ENCODE measurements at regions of chr15 and their contacts with region 1.

Region 1: GRCh38 chr15:90886041-90886614 is 1.8 kb downstream of the FES start:
- DNase-seq: peak; percentile 87
- H3K4me3 Mint-ChIP-seq: no peak overlapping the region
- H3K27ac Mint-ChIP-seq: no peak overlapping the region
- H3K4me1 Mint-ChIP-seq: no peaks in the 10 kb centered on the region
- H3K27me3 Mint-ChIP-seq: peaks cover 25% of the 10 kb centered on the region
- CTCF ChIP-seq: peak; percentile 98

Region 2: DNA sequence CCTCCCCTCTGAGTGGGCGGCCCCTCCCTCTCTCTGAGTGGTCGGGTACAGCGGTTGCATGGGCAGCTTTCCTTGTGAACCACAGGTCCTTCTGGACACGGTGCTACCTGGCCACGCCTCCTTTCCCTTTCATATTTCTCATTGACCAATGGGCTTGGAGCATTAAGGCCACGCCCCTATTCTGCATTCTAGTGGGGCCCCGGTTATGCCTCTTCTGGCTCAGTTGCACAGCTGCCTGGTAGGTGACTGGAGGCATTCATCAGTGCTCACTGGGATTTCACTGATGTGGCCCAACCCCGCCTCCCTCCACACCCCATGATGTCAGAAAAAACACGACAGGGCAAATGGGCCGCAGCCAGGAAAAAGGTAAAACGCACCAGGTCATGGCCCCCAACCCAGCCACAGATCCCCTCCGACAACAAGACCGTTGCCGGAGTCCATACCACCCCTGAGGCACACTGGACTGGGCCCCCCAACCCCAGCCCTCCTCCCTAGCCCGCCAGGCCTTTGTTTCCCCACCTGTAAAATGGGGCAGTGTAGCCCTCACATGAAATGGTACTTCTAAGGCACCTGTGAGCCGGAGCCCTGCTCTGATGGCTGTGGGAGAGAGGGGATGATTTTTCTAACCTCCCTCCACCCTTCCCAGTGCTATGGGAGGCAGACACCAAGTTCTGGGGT is 594.3 kb before region 1 on chr15:
- CTCF ChIA-PET with region 1: no interaction called
- intact Hi-C with region 1: loop called (anchors 5 kb)
- DNase-seq: peak; percentile 59
- H3K4me3 Mint-ChIP-seq: no peak overlapping the region
- H3K27ac Mint-ChIP-seq: no peak overlapping the region
- H3K4me1 Mint-ChIP-seq: peaks cover 11% of the 10 kb centered on the region
- H3K27me3 Mint-ChIP-seq: no peaks in the 10 kb centered on the region
- CTCF ChIP-seq: no peak

Region 3: GRCh38 chr15:90648137-90649070 is 237.7 kb before region 1 on chr15:
- CTCF ChIA-PET with region 1: interaction called, 32 read pairs
- intact Hi-C with region 1: loop called (anchors 1 kb)
- DNase-seq: peak; percentile 61
- H3K4me3 Mint-ChIP-seq: peak overlapping the region; percentile 42
- H3K27ac Mint-ChIP-seq: peak overlapping the region; percentile 82
- H3K4me1 Mint-ChIP-seq: peaks cover 9% of the 10 kb centered on the region
- H3K27me3 Mint-ChIP-seq: no peaks in the 10 kb centered on the region
- CTCF ChIP-seq: peak; percentile 90

Region 4: DNA sequence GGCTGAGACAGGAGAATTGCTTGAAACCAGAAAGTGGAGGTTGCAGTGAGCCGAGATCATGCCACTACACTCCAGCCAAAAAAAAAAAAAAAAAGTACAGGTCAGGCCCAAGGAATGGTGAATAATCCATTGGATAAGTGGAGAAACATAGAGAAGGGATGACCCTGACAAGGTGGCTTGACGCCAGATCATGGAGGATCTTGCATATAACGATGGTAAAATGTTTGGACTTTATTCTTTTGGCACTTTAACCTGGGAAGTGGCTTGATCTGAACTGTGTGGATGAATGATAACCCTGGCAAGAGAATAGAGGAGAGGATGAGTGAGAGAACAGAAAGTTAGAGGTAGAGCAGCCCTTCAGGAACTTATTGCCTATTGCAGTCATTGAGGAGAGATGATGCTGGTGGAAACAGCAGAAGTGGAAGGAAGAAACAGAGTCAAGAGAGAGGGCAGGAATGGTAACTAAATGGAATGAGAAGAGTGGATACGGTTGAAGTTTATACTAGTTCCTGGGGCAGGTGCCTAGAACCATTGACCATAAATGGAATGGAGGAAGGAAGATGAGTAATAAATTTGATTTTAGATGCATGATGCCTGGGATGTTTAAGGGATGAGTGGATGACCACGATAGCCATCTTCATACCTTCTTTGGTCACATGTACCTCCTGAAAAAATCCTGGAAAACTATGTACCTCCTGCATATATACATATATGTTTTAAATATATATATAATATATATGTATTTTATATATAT is 111.2 kb before region 1 on chr15:
- CTCF ChIA-PET with region 1: no interaction called
- intact Hi-C with region 1: loop called (anchors 10 kb)
- DNase-seq: no peak
- H3K4me3 Mint-ChIP-seq: no peak overlapping the region
- H3K27ac Mint-ChIP-seq: no peak overlapping the region
- H3K4me1 Mint-ChIP-seq: peaks cover 11% of the 10 kb centered on the region
- H3K27me3 Mint-ChIP-seq: no peaks in the 10 kb centered on the region
- CTCF ChIP-seq: no peak

Region 5: DNA sequence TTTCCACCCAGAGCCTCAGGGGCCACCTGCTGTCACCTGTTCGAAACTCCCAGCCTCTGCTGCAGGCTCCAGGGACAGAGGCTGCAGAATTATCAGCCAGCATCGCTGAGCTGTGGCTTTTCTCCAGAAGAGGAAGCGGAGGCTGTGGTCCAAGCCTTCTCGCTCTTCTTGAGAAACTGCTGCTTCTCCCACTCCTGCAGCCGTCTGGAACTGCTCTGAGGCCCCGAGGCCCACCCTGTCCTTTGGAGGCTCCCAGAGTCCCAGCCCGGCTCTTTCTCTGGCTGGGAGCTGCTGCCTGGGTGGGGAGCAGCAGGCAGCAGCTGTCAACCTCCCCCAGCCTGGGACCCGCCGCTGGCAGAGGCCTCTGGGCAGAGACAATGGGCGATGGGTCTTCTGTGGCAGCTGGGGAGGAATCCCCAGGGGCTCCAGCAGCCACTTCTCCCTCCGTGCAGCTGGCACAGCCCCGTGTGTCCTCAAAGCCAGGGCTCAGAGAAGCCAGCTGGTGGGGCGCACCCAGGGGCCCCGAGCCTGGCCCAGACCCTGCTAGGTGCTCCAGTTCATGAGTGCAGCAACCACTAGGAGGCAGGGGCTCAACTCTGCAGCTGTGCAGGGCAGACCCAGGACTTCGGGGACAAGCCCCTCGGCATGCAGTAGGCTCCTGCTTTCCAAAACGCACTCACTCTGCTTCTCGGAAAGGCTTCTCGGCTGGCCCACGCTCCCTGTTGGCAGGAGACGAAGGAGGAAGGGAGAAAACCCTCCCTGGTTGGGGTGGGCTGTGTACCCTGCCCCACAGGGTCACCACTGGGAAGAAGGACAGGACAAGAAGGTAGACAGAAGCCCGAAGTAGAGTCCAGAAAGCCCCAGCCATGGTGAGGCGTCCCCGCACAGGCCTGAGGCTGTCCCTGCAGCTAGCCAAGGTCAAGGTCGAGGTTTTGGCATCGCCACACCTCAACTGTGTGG is 67.6 kb before region 1 on chr15:
- CTCF ChIA-PET with region 1: no interaction called
- intact Hi-C with region 1: loop called (anchors 5 kb)
- DNase-seq: no peak
- H3K4me3 Mint-ChIP-seq: no peak overlapping the region
- H3K27ac Mint-ChIP-seq: no peak overlapping the region
- H3K4me1 Mint-ChIP-seq: no peaks in the 10 kb centered on the region
- H3K27me3 Mint-ChIP-seq: peaks cover 9% of the 10 kb centered on the region
- CTCF ChIP-seq: no peak

Region 6: DNA sequence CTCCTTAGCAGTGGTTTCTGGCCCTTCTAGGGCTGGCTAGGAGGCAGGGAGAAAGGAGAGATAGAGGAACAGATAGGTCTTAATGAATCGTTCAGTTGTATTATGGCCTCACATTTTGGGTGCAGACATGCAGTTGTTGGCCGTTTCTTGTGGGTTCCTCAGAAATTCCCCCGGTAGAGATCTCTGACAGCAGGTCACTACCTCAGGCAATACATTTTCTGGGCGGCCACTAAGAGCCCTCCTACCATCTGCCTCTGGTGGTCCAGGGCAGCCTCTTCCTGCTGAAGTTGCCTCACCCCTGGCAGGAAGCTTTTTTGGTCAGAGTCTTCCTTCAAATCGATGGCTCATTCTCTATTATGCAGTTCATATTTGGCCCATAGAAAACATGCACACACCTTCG is 480.0 kb after region 1 on chr15:
- CTCF ChIA-PET with region 1: no interaction called
- intact Hi-C with region 1: no loop called
- DNase-seq: no peak
- H3K4me3 Mint-ChIP-seq: no peak overlapping the region
- H3K27ac Mint-ChIP-seq: no peak overlapping the region
- H3K4me1 Mint-ChIP-seq: no peaks in the 10 kb centered on the region
- H3K27me3 Mint-ChIP-seq: no peaks in the 10 kb centered on the region
- CTCF ChIP-seq: no peak

Measured in Calu3 (cell line).